Endothelial cell of umbilical vein (primary cell): ENCODE measurements at regions of chr12 and their contacts with region 1.

Region 1: GRCh38 chr12:100154474-100155247 is 12.0 kb upstream of the BLTP3B start:
- DNase-seq: peak; percentile 51
- H3K4me3 ChIP-seq: no peak overlapping the region
- H3K27ac ChIP-seq: no peak overlapping the region
- H3K4me1 ChIP-seq: no peaks in the 10 kb centered on the region
- H3K27me3 ChIP-seq: no peaks in the 10 kb centered on the region
- CTCF ChIP-seq: peak; percentile 91 to 93
- POLR2A ChIP-seq: no peak

Region 2: DNA sequence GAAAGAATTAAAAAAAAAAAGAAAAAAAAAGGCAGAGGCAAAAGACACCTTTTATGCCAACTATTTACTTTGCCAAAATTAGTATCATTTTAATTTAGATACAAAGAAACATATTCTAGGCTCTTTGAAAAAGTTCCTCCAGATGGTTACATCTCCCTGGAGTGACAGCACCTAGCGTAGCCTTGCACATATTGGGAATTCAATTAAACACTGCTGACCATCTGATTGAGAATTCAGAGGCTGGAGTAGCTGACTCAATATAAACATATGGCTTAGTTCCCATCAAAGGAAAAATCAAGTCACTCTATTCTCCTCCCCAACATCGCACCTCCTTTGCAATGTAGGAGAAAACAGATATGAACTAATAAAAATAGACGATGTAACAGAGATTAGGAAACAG is 206.3 kb before region 1 on chr12:
- CTCF ChIA-PET with region 1: no interaction called
- POLR2A ChIA-PET with region 1: no interaction called
- dilution Hi-C with region 1: no loop called
- intact Hi-C with region 1: no loop called
- DNase-seq: no peak
- H3K4me3 ChIP-seq: no peak overlapping the region
- H3K27ac ChIP-seq: no peak overlapping the region
- H3K4me1 ChIP-seq: no peaks in the 10 kb centered on the region
- H3K27me3 ChIP-seq: no peaks in the 10 kb centered on the region
- CTCF ChIP-seq: no peak
- POLR2A ChIP-seq: no peak

Region 3: GRCh38 chr12:100142851-100143559 is 11.7 kb before region 1 on chr12 and contains the start of gene BLTP3B:
- CTCF ChIA-PET with region 1: interaction called, 20 read pairs
- POLR2A ChIA-PET with region 1: no interaction called
- dilution Hi-C with region 1: no loop called
- intact Hi-C with region 1: loop called (anchors 1 kb)
- DNase-seq: peak; percentile 78
- H3K4me3 ChIP-seq: peak within 1 kb of the TSS; percentile 64 to 97 (median 74)
- H3K27ac ChIP-seq: peak within 1 kb of the TSS; percentile 91
- H3K4me1 ChIP-seq: peaks cover 5% of the 10 kb centered on the region
- H3K27me3 ChIP-seq: no peaks in the 10 kb centered on the region
- CTCF ChIP-seq: no peak
- POLR2A ChIP-seq: peak; percentile 53
- total RNA-seq, gene BLTP3B: 16.0 and 17.9 TPM in 2 replicates

Region 4: GRCh38 chr12:100168586-100168985 is 13.9 kb after region 1 on chr12:
- CTCF ChIA-PET with region 1: interaction called, 26 read pairs
- POLR2A ChIA-PET with region 1: no interaction called
- dilution Hi-C with region 1: no loop called
- intact Hi-C with region 1: no loop called
- DNase-seq: no peak
- H3K4me3 ChIP-seq: no peak overlapping the region
- H3K27ac ChIP-seq: no peak overlapping the region
- H3K4me1 ChIP-seq: no peaks in the 10 kb centered on the region
- H3K27me3 ChIP-seq: no peaks in the 10 kb centered on the region
- CTCF ChIP-seq: no peak
- POLR2A ChIP-seq: no peak

Region 5: GRCh38 chr12:100200463-100201181 is 46.0 kb after region 1 on chr12 and contains the start of gene ACTR6:
- CTCF ChIA-PET with region 1: interaction called, 17 read pairs
- POLR2A ChIA-PET with region 1: no interaction called
- dilution Hi-C with region 1: no loop called
- intact Hi-C with region 1: loop called (anchors 1 kb)
- DNase-seq: peak; percentile 96
- H3K4me3 ChIP-seq: peak within 1 kb of the TSS; percentile 74 to 99 (median 95)
- H3K27ac ChIP-seq: peak within 1 kb of the TSS; percentile 74
- H3K4me1 ChIP-seq: peaks cover 4% of the 10 kb centered on the region
- H3K27me3 ChIP-seq: no peaks in the 10 kb centered on the region
- CTCF ChIP-seq: no peak
- POLR2A ChIP-seq: peak; percentile 83
- total RNA-seq, gene ACTR6: 23.2 and 24.7 TPM in 2 replicates

Region 6: GRCh38 chr12:100290016-100290415 is 135.4 kb after region 1 on chr12:
- CTCF ChIA-PET with region 1: no interaction called
- POLR2A ChIA-PET with region 1: no interaction called
- dilution Hi-C with region 1: no loop called
- intact Hi-C with region 1: no loop called
- DNase-seq: no peak
- H3K4me3 ChIP-seq: no peak overlapping the region
- H3K27ac ChIP-seq: no peak overlapping the region
- H3K4me1 ChIP-seq: no peaks in the 10 kb centered on the region
- H3K27me3 ChIP-seq: no peaks in the 10 kb centered on the region
- CTCF ChIP-seq: no peak
- POLR2A ChIP-seq: no peak

Region 7: GRCh38 chr12:100573292-100574186 is 418.9 kb after region 1 on chr12 and contains the start of gene GAS2L3:
- CTCF ChIA-PET with region 1: no interaction called
- POLR2A ChIA-PET with region 1: no interaction called
- dilution Hi-C with region 1: no loop called
- intact Hi-C with region 1: no loop called
- DNase-seq: peak; percentile 93
- H3K4me3 ChIP-seq: peak within 1 kb of the TSS; percentile 24 to 89 (median 87)
- H3K27ac ChIP-seq: peak within 1 kb of the TSS; percentile 79
- H3K4me1 ChIP-seq: peaks cover 34% of the 10 kb centered on the region
- H3K27me3 ChIP-seq: peaks cover 1 to 2% of the 10 kb centered on the region in 2 experiments
- CTCF ChIP-seq: no peak
- POLR2A ChIP-seq: peak; percentile 40
- total RNA-seq, gene GAS2L3: 39.9 and 47.1 TPM in 2 replicates

Region 8: GRCh38 chr12:100741084-100741711 is 586.5 kb after region 1 on chr12:
- CTCF ChIA-PET with region 1: no interaction called
- POLR2A ChIA-PET with region 1: no interaction called
- dilution Hi-C with region 1: no loop called
- intact Hi-C with region 1: loop called (anchors 5 kb)
- DNase-seq: peak; percentile 44
- H3K4me3 ChIP-seq: no peak overlapping the region
- H3K27ac ChIP-seq: no peak overlapping the region
- H3K4me1 ChIP-seq: no peaks in the 10 kb centered on the region
- H3K27me3 ChIP-seq: no peaks in the 10 kb centered on the region
- CTCF ChIP-seq: peak; percentile 52 to 60
- POLR2A ChIP-seq: no peak